ENCODE measurements at regions of chr3 and their contacts with region 1.

Region 1: GRCh38 chr3:193780810-193781472 is 187.9 kb downstream of the OPA1 start:
- DNase-seq: peak; percentile 72
- ATAC-seq: peak; percentile 74
- H3K4me3 Mint-ChIP-seq: no peak overlapping the region
- H3K27ac Mint-ChIP-seq: no peak overlapping the region
- H3K4me1 Mint-ChIP-seq: peaks cover 62% of the 10 kb centered on the region
- H3K27me3 Mint-ChIP-seq: peaks cover 34% of the 10 kb centered on the region
- CTCF ChIP-seq: peak; percentile 63

Region 2: GRCh38 chr3:193680220-193680619 is 100.7 kb before region 1 on chr3:
- CTCF ChIA-PET with region 1: no interaction called
- POLR2A ChIA-PET with region 1: no interaction called
- DNase-seq: no peak
- ATAC-seq: peak; percentile 68
- H3K4me3 Mint-ChIP-seq: no peak overlapping the region
- H3K27ac Mint-ChIP-seq: peak overlapping the region; percentile 21; the same call in 1 of the 2 replicates
- H3K4me1 Mint-ChIP-seq: peaks cover 9% of the 10 kb centered on the region
- H3K27me3 Mint-ChIP-seq: no peaks in the 10 kb centered on the region
- CTCF ChIP-seq: no peak

Region 3: DNA sequence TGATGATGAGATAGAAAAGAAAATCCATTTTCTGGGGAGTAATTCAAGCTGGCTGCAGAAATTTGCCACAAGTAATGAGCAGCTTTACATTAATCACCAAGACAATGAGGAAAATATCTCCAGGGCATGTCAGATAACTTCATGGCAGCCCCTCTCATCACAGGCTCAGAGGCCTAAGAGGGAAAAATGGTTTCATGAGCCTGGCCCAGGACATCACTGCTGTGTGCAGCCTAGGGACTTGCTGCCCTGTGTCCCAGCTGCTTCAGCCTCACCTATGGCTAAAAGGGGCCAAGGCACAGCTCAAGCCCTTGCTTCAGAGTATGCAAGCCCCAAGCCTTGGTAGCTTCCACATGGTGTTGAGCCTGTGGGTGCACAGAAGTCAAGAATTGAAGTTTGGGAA is 26.2 kb before region 1 on chr3:
- CTCF ChIA-PET with region 1: no interaction called
- POLR2A ChIA-PET with region 1: no interaction called
- DNase-seq: no peak
- ATAC-seq: no peak
- H3K4me3 Mint-ChIP-seq: no peak overlapping the region
- H3K27ac Mint-ChIP-seq: no peak overlapping the region
- H3K4me1 Mint-ChIP-seq: no peaks in the 10 kb centered on the region
- H3K27me3 Mint-ChIP-seq: peaks cover 6% of the 10 kb centered on the region; the same call in 1 of the 2 replicates
- CTCF ChIP-seq: no peak

Region 4: DNA sequence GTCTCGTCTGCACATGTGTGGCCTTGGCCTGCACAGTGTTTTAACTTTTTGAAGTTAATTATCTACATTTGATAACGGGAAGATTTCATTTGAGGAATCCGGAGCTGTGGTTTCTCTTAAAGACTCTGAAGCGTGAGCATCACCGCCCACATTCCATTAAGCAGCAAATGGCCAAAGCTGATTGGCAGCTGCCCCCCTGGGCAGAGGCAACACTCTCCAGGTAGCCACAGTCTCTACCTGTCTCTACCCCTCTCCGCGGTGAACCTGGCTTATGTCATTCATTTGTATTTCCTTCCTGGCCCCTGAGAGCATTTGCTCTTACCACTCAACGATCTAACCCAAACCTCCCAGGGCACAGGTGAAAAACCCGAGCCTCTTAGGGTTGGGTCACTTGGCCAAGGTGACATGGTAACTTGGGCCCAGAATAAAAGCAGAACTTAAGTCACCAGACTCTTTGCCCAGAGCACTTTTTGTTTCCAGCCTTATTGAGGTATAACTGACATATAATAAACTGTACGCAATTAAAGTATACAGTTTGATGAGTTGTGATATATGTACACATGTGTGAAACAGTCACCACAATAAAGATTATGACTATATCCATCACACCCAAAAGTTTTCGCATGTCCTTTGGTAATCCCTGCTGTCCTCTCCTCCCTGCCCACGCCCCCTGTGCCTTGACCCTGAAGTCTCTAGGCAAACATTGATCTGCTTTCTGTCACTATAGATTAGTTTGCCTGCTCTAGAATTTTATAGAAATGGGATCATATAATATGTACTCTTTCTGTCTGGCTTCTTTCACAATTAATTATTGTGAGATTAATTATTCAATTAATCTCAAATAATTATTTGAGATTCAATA is 109.3 kb after region 1 on chr3:
- CTCF ChIA-PET with region 1: no interaction called
- POLR2A ChIA-PET with region 1: no interaction called
- DNase-seq: no peak
- ATAC-seq: peak; percentile 72
- H3K4me3 Mint-ChIP-seq: no peak overlapping the region
- H3K27ac Mint-ChIP-seq: no peak overlapping the region
- H3K4me1 Mint-ChIP-seq: peaks cover 28% of the 10 kb centered on the region
- H3K27me3 Mint-ChIP-seq: no peaks in the 10 kb centered on the region; the same call in 1 of the 2 replicates
- CTCF ChIP-seq: no peak

Region 5: GRCh38 chr3:194134757-194135528 is 354.0 kb after region 1 on chr3:
- CTCF ChIA-PET with region 1: interaction called, 25 read pairs
- POLR2A ChIA-PET with region 1: interaction called, 5 read pairs
- DNase-seq: peak; percentile 95
- ATAC-seq: peak; percentile 36
- H3K4me3 Mint-ChIP-seq: peak overlapping the region; percentile 92
- H3K27ac Mint-ChIP-seq: peak overlapping the region; percentile 89
- H3K4me1 Mint-ChIP-seq: peaks cover 57% of the 10 kb centered on the region
- H3K27me3 Mint-ChIP-seq: peaks cover 18% of the 10 kb centered on the region
- CTCF ChIP-seq: no peak

Region 6: GRCh38 chr3:194141415-194142155 is 360.6 kb after region 1 on chr3:
- CTCF ChIA-PET with region 1: interaction called, 25 read pairs
- POLR2A ChIA-PET with region 1: interaction called, 5 read pairs
- DNase-seq: peak; percentile 87
- ATAC-seq: peak; percentile 52
- H3K4me3 Mint-ChIP-seq: peak overlapping the region; percentile 10
- H3K27ac Mint-ChIP-seq: peak overlapping the region; percentile 90
- H3K4me1 Mint-ChIP-seq: peaks cover 40% of the 10 kb centered on the region
- H3K27me3 Mint-ChIP-seq: no peaks in the 10 kb centered on the region
- CTCF ChIP-seq: no peak